Prostate gland (tissue), 2 donors: ENCODE measurements at regions of chr16 and their contacts with region 1.

Region 1: DNA sequence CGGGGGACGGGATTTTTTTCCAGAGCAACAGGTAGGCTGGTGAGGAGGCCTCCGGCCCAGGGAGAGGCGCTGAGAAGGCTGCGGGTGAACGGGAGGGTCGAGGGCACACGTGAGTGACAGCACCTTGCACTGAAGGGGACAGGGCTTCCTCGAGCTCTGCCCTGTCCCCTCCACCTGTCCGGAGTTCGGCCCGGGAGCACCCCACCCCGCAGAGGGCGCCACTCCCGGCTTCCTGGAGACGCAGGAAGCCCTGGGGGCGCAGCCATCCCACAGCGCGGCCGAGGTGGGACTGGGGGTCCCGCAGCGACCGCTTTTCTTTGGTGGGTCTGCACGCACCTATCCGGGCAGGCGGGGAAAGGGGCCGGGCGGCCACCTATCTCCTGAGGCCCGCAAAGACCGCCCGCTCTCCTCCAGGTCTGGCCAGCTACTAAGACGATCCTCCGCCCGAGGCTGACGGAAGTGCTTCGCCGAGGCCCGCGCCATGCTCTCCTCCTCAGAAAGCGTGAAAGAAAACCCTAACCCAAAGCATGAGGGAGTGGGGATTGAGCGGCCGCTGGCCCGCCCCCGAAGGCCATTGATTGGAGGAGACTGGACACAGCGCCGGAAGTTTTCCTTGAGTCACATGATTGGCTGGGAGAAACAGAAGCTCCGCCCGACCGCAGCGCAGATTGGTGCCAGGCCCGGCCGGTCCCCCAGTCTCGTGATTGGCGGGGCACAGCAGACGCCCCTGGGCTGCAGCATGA is 34.3 kb downstream of the DDX19A start:
- DNase-seq: peak; percentile 97
- H3K4me3 ChIP-seq: peak overlapping the region; percentile 61 to 70
- H3K27ac ChIP-seq: peak overlapping the region; percentile 72 to 79
- H3K4me1 ChIP-seq: no peaks in the 10 kb centered on the region
- H3K27me3 ChIP-seq: no peaks in the 10 kb centered on the region
- CTCF ChIP-seq: peak in 2 of 4 experiments; percentile 13 to 34
- POLR2A ChIP-seq: peak; percentile 80

Region 2: GRCh38 chr16:70267516-70267915 is 113.5 kb before region 1 on chr16:
- intact Hi-C with region 1: no loop called
- DNase-seq: no peak
- H3K4me3 ChIP-seq: no peak overlapping the region
- H3K27ac ChIP-seq: no peak overlapping the region
- H3K4me1 ChIP-seq: no peaks in the 10 kb centered on the region
- H3K27me3 ChIP-seq: no peaks in the 10 kb centered on the region
- CTCF ChIP-seq: peak in 3 of 4 experiments; percentile 31 to 56 (median 37)
- POLR2A ChIP-seq: no peak

Region 3: DNA sequence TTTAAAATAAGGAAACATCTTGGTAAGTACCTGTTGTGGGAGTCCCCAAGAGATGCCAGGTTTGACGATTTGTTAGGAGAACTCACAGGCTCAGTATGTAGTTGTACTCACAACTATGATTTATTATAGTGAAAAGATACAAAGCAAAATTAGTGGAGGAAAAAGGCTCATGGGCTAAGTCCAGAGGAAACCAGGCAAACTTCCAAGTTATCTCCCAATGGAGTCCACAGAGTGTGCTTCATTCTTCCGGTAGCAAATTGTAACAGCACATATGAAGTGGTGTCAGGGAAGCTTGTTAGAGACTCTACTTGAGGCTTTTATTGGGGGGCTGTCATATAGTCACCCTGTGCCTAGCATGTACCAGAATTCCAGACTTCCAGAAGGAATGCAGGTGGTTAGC is 32.0 kb before region 1 on chr16:
- intact Hi-C with region 1: loop called (anchors 5 kb)
- DNase-seq: no peak
- H3K4me3 ChIP-seq: no peak overlapping the region
- H3K27ac ChIP-seq: no peak overlapping the region
- H3K4me1 ChIP-seq: peaks cover 6% of the 10 kb centered on the region
- H3K27me3 ChIP-seq: no peaks in the 10 kb centered on the region
- CTCF ChIP-seq: no peak
- POLR2A ChIP-seq: no peak

Region 4: GRCh38 chr16:70438969-70439862 is 58.2 kb after region 1 on chr16 and contains the start of gene ST3GAL2:
- intact Hi-C with region 1: loop called (anchors 5 kb)
- DNase-seq: peak; percentile 87
- H3K4me3 ChIP-seq: peak within 1 kb of the TSS; percentile 59 to 67
- H3K27ac ChIP-seq: peak within 1 kb of the TSS; percentile 55 to 67
- H3K4me1 ChIP-seq: no peaks in the 10 kb centered on the region
- H3K27me3 ChIP-seq: no peaks in the 10 kb centered on the region
- CTCF ChIP-seq: peak in 1 of 4 experiments; percentile 55
- POLR2A ChIP-seq: no peak
- total RNA-seq, gene ST3GAL2: 8.7 to 54.5 TPM

Region 5: GRCh38 chr16:70454222-70455034 is 73.4 kb after region 1 on chr16 and contains the start of gene FCSK:
- intact Hi-C with region 1: loop called (anchors 5 kb)
- DNase-seq: peak; percentile 43
- H3K4me3 ChIP-seq: peak within 1 kb of the TSS; percentile 87 to 97
- H3K27ac ChIP-seq: peak within 1 kb of the TSS; percentile 89 to 92
- H3K4me1 ChIP-seq: peaks cover 3% of the 10 kb centered on the region
- H3K27me3 ChIP-seq: no peaks in the 10 kb centered on the region
- CTCF ChIP-seq: peak in 2 of 4 experiments; percentile 25 to 27
- POLR2A ChIP-seq: no peak
- total RNA-seq, gene FCSK: 23.0 to 33.1 TPM